Right ventricle myocardium superior (tissue), 1 donor: ENCODE measurements at regions of chr2 and their contacts with region 1.

Region 1: DNA sequence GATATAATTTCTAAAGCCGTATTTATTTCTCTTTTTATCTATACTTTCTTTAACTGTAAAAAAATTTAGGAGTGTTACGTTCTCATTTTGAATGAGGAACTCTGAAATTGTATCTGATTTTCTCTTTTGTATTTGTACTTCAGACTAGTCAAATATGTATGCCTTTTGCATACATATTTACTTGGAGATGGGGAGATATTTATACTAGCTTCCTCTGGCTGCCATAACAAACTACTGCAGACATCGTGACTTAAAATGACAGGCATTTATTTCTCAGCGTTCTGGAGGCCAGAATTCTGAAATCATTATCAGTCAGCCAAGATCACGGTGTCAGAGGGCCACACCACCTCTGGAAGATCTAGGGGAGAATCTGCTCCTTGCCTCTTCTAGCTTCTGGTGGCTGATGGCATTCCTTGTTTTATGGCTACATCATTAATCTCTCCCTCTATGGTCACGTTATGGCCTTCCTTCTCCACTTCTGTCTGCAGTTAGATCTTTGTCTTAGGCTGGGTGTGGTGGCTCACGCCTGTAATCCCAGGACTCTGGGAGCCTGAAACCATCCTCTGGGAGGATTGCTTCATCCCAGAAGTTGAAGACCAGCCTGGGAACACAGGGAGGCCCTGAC is 8.2 kb downstream of the LCLAT1 start:
- DNase-seq: no peak
- ATAC-seq: no peak

Region 2: GRCh38 chr2:30217644-30218337 is 237.4 kb before region 1 on chr2:
- intact Hi-C with region 1: loop called (anchors 10 kb)
- DNase-seq: no peak
- ATAC-seq: no peak